Activated T-helper 1 cell treated with anti-CD3 and anti-CD28 coated beads, Interleukin-12 subunit alpha, Interleukin-12 subunit beta, Interleukin-2, Interleukin-4 antibody, amounts not matched to agents 30 ng/mL and 10 ng/mL and 1 ng/mL, durations not matched to agents 14 hours and 24 hours and 36 hours (primary cell): ENCODE measurements at regions of chr1 and their contacts with region 1.

Region 1: DNA sequence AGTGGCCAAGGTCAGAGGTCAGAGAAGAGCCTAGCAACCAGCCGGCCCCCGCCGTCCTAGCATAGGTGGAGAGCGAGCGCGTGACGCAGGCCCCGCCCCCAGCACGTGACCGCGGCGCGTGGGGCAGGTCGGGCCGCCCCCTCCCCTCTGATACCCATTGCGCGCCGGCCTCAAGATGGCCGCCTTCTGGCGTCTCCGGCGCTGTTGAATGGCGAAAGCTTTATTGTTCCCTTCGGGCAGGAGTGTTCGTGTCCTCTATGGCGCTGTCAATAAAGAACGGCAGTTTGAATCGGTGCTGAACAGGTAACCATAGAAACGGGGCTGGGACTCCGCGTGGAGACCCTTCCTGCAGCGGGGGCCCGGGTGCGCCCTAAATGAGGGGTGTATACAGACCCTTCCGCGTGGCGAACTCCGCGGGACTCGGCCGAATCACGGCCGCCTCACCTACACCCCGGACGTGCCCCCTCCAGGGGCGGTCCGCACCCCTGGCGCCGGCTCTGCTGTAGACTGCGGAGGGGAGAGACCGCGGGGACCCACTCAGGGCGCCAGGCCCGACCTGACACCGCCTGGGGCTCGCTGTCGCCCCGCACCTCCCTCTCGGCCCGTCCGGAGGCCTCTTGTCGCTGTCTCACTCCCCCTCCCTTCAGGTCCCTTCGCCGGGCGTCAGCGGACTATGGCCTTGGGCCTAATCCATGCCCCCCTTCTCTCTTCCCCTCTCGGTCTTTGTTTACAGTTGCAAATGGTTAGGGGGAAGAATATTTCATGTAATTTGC is at the start of gene ZBTB40:
- DNase-seq: peak; percentile 92
- H3K4me3 Mint-ChIP-seq: peak within 1 kb of the TSS; percentile 96
- H3K27ac Mint-ChIP-seq: peak within 1 kb of the TSS; percentile 95
- H3K4me1 Mint-ChIP-seq: peaks cover 23% of the 10 kb centered on the region
- H3K27me3 Mint-ChIP-seq: peaks cover 2% of the 10 kb centered on the region
- total RNA-seq, gene ZBTB40: 19.5 and 20.0 TPM in 2 replicates

Region 2: GRCh38 chr1:22431965-22432364 is 19.9 kb before region 1 on chr1:
- intact Hi-C with region 1: loop called (anchors 1 kb)
- DNase-seq: no peak
- H3K4me3 Mint-ChIP-seq: no peak overlapping the region
- H3K27ac Mint-ChIP-seq: no peak overlapping the region
- H3K4me1 Mint-ChIP-seq: no peaks in the 10 kb centered on the region
- H3K27me3 Mint-ChIP-seq: peaks cover 15% of the 10 kb centered on the region

Region 3: GRCh38 chr1:22619252-22619651 is 167.4 kb after region 1 on chr1:
- intact Hi-C with region 1: no loop called
- DNase-seq: no peak
- H3K4me3 Mint-ChIP-seq: no peak overlapping the region
- H3K27ac Mint-ChIP-seq: no peak overlapping the region
- H3K4me1 Mint-ChIP-seq: no peaks in the 10 kb centered on the region
- H3K27me3 Mint-ChIP-seq: peaks cover 6% of the 10 kb centered on the region

Region 4: GRCh38 chr1:23019094-23019862 is 567.4 kb after region 1 on chr1 and contains the start of gene KDM1A:
- intact Hi-C with region 1: no loop called
- DNase-seq: peak; percentile 89
- H3K4me3 Mint-ChIP-seq: peak within 1 kb of the TSS; percentile 96
- H3K27ac Mint-ChIP-seq: peak within 1 kb of the TSS; percentile 91
- H3K4me1 Mint-ChIP-seq: peaks cover 37% of the 10 kb centered on the region
- H3K27me3 Mint-ChIP-seq: peaks cover 12% of the 10 kb centered on the region
- total RNA-seq, gene KDM1A: 79.9 and 80.8 TPM in 2 replicates

Region 5: GRCh38 chr1:23800400-23801337 is 1348.8 kb after region 1 on chr1 and contains the start of gene GALE:
- intact Hi-C with region 1: loop called (anchors 5 kb)
- DNase-seq: peak; percentile 93
- H3K4me3 Mint-ChIP-seq: peak within 1 kb of the TSS; percentile 97
- H3K27ac Mint-ChIP-seq: peak within 1 kb of the TSS; percentile 88
- H3K4me1 Mint-ChIP-seq: peaks cover 13% of the 10 kb centered on the region
- H3K27me3 Mint-ChIP-seq: peaks cover 2% of the 10 kb centered on the region
- total RNA-seq, gene GALE: 62.4 and 63.4 TPM in 2 replicates

Region 6: GRCh38 chr1:23979878-23980724 is 1528.2 kb after region 1 on chr1 and contains the start of gene SRSF10:
- intact Hi-C with region 1: loop called (anchors 10 kb)
- DNase-seq: peak; percentile 98
- H3K4me3 Mint-ChIP-seq: peak within 1 kb of the TSS; percentile 97
- H3K27ac Mint-ChIP-seq: peak within 1 kb of the TSS; percentile 97
- H3K4me1 Mint-ChIP-seq: peaks cover 47% of the 10 kb centered on the region
- H3K27me3 Mint-ChIP-seq: no peaks in the 10 kb centered on the region
- total RNA-seq, gene SRSF10: 238 and 243 TPM in 2 replicates